Mammary epithelial cell (primary cell): ENCODE measurements at regions of chr21 and their contacts with region 1.

Region 1: GRCh38 chr21:37711836-37712568 is 204.3 kb downstream of the KCNJ6 start:
- DNase-seq: peak; percentile 57
- H3K4me3 ChIP-seq: no peak overlapping the region
- H3K27ac ChIP-seq: no peak overlapping the region
- H3K4me1 ChIP-seq: no peaks in the 10 kb centered on the region
- H3K27me3 ChIP-seq: no peaks in the 10 kb centered on the region
- CTCF ChIP-seq: peak; percentile 91 to 92

Region 2: DNA sequence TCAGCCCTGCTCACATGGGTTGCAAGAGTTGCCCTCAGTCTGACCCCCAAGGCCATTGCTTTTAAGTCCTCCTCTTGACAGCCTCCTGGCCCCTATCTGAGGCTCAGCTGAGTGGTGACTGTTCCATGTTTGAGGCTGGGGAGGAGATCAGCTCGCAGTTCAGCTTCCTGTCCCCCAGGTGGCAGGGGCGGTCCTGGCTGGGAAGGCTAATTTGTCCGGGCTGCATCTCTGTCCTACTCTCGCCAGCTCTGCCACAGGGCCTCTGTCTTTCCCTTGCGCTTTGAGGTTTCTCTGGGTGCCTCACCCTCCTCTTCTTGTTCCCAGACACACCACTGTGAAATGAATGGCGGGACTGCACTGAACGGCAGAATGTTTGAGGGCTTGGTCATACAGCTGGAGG is 47.0 kb after region 1 on chr21:
- CTCF ChIA-PET with region 1: no interaction called
- dilution Hi-C with region 1: no loop called
- in situ Hi-C with region 1: no loop called
- intact Hi-C with region 1: loop called (anchors 1 kb)
- DNase-seq: peak; percentile 37
- H3K4me3 ChIP-seq: no peak overlapping the region
- H3K27ac ChIP-seq: no peak overlapping the region
- H3K4me1 ChIP-seq: no peaks in the 10 kb centered on the region
- H3K27me3 ChIP-seq: peaks cover 3% of the 10 kb centered on the region
- CTCF ChIP-seq: peak; percentile 40 to 72

Region 3: GRCh38 chr21:37916310-37917051 is 204.5 kb after region 1 on chr21 and contains the start of gene KCNJ6:
- CTCF ChIA-PET with region 1: no interaction called
- dilution Hi-C with region 1: no loop called
- in situ Hi-C with region 1: no loop called
- intact Hi-C with region 1: loop called (anchors 1 kb)
- DNase-seq: peak; percentile 37
- H3K4me3 ChIP-seq: no peak within 1 kb of the TSS
- H3K27ac ChIP-seq: no peak within 1 kb of the TSS
- H3K4me1 ChIP-seq: no peaks in the 10 kb centered on the region
- H3K27me3 ChIP-seq: peaks cover 20% of the 10 kb centered on the region
- CTCF ChIP-seq: peak in 1 of 2 donors; percentile 47
- total RNA-seq, gene KCNJ6: not detected

Region 4: GRCh38 chr21:38170280-38170679 is 458.3 kb after region 1 on chr21:
- CTCF ChIA-PET with region 1: interaction called, 4 read pairs
- dilution Hi-C with region 1: no loop called
- in situ Hi-C with region 1: no loop called
- intact Hi-C with region 1: loop called (anchors 2 kb)
- DNase-seq: peak; percentile 43
- H3K4me3 ChIP-seq: no peak overlapping the region
- H3K27ac ChIP-seq: no peak overlapping the region
- H3K4me1 ChIP-seq: peaks cover 9% of the 10 kb centered on the region
- H3K27me3 ChIP-seq: no peaks in the 10 kb centered on the region
- CTCF ChIP-seq: peak; percentile 73 to 79

Region 5: GRCh38 chr21:38525454-38525853 is 813.5 kb after region 1 on chr21:
- CTCF ChIA-PET with region 1: interaction called, 14 read pairs
- dilution Hi-C with region 1: no loop called
- in situ Hi-C with region 1: no loop called
- intact Hi-C with region 1: no loop called
- DNase-seq: no peak
- H3K4me3 ChIP-seq: no peak overlapping the region
- H3K27ac ChIP-seq: no peak overlapping the region
- H3K4me1 ChIP-seq: no peaks in the 10 kb centered on the region
- H3K27me3 ChIP-seq: peaks cover 6% of the 10 kb centered on the region
- CTCF ChIP-seq: no peak